Panc1 (cell line): ENCODE measurements at regions of chr13 and their contacts with region 1.

Region 1: GRCh38 chr13:97359181-97360057 is 74.5 kb upstream of the RAP2A start:
- DNase-seq: no peak
- ATAC-seq: peak; percentile 85
- H3K4me3 ChIP-seq: no peak overlapping the region
- H3K27ac ChIP-seq: peak overlapping the region; percentile 88
- H3K4me1 ChIP-seq: peaks cover 51% of the 10 kb centered on the region
- H3K27me3 ChIP-seq: no peaks in the 10 kb centered on the region
- CTCF ChIP-seq: peak; percentile 82

Region 2: DNA sequence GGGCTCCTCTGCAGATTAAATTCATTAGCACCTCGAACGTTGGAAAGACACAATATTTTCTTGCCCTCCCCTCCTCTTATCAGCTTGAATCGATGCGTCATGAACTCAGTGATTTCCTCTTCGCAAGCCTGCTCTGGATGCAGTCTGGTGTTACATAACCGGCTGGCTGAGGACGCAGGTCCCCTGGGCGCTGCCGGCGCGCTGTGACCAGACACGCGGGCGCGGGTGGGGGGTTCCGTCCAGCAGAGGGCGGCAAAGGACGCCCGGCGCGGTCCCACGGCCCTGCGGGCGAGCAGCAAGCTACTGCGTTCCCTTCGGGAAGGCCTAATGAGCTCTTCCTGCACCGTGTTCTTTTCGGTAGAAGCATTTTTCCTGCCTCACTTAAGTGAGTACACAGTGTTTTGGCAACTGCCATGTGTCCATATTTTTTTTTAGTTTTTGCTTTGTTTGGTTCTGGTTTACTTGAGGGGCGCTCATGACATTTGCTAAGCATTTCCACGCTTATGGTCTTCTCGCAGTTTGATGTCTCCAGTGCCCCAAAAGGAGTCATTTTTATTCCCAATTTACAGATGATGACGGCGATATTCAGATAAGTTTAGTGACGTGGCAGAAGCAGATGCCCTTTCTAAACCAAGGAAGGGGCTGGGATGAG is 249.5 kb before region 1 on chr13:
- CTCF ChIA-PET with region 1: no interaction called
- POLR2A ChIA-PET with region 1: no interaction called
- in situ Hi-C with region 1: no loop called
- intact Hi-C with region 1: loop called (anchors 10 kb)
- DNase-seq: peak; percentile 48
- ATAC-seq: peak; percentile 92
- H3K4me3 ChIP-seq: peak overlapping the region in 1 of 2 experiments; percentile 27; a peak in 2 of 4 replicates
- H3K27ac ChIP-seq: peak overlapping the region; percentile 98
- H3K4me1 ChIP-seq: peaks cover 61% of the 10 kb centered on the region
- H3K27me3 ChIP-seq: no peaks in the 10 kb centered on the region
- CTCF ChIP-seq: peak; percentile 94

Region 3: GRCh38 chr13:97296740-97297139 is 62.7 kb before region 1 on chr13:
- CTCF ChIA-PET with region 1: no interaction called
- POLR2A ChIA-PET with region 1: interaction called, 17 read pairs
- in situ Hi-C with region 1: no loop called
- intact Hi-C with region 1: no loop called
- DNase-seq: no peak
- ATAC-seq: no peak
- H3K4me3 ChIP-seq: no peak overlapping the region
- H3K27ac ChIP-seq: peak overlapping the region; percentile 100
- H3K4me1 ChIP-seq: peaks cover 75% of the 10 kb centered on the region
- H3K27me3 ChIP-seq: no peaks in the 10 kb centered on the region
- CTCF ChIP-seq: no peak

Region 4: DNA sequence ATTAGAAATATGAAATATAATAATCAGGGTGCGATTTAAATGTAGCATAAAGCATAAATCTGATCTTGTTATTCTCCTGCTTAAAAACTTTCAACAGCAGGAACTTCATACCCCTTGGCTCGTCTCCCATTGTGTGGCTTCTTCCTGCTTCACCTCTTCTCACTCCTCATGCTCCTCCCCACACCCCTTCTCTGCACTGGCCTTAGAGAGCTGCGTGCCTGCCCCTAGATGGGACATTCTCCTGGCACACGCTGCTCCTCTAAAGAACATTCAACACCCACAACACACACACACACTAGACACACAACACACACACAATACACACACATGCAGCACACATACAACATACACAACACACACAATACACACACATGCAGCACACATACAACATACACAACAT is 30.1 kb before region 1 on chr13:
- CTCF ChIA-PET with region 1: no interaction called
- POLR2A ChIA-PET with region 1: no interaction called
- in situ Hi-C with region 1: no loop called
- intact Hi-C with region 1: no loop called
- DNase-seq: no peak
- ATAC-seq: no peak
- H3K4me3 ChIP-seq: no peak overlapping the region
- H3K27ac ChIP-seq: peak overlapping the region; percentile 100
- H3K4me1 ChIP-seq: peaks cover 86% of the 10 kb centered on the region
- H3K27me3 ChIP-seq: no peaks in the 10 kb centered on the region
- CTCF ChIP-seq: no peak